Adrenal gland (tissue), 19 donors: ENCODE measurements at regions of chr13 and their contacts with region 1.

Region 1: GRCh38 chr13:20713751-20714150 is 10.3 kb downstream of the IL17D start:
- DNase-seq: peak in 5 of 7 donors; percentile 54 to 79 (median 69)
- H3K4me3 ChIP-seq: no peak overlapping the region
- H3K27ac ChIP-seq: peak overlapping the region in 2 of 5 donors; percentile 50 to 62
- H3K4me1 ChIP-seq: peaks cover 5 to 24% of the 10 kb centered on the region in 2 donors
- H3K27me3 ChIP-seq: no peaks in the 10 kb centered on the region
- CTCF ChIP-seq: no peak
- POLR2A ChIP-seq: peak in 1 of 2 donors; percentile 15

Region 2: DNA sequence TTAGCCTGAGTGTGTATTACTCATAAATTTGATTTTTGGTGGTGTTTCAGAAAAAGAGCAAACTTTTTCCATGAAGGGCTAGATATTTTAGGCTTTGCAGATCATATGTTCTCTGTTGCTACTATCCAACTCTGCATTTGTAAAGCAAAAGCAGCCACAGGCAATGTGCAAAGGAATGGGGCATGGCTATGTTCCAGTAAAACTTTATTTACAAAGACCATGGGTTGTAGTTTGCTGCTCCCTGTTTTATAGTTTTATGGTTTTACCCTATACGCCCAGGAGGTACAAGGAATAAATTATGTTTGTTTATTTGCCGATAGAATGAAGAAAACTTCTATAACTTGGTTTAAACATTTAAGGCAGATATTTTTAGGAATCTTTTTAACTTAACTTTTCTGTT is 123.2 kb before region 1 on chr13:
- intact Hi-C with region 1: no loop called
- DNase-seq: no peak
- H3K4me3 ChIP-seq: no peak overlapping the region
- H3K27ac ChIP-seq: no peak overlapping the region
- H3K4me1 ChIP-seq: no peaks in the 10 kb centered on the region
- H3K27me3 ChIP-seq: no peaks in the 10 kb centered on the region
- CTCF ChIP-seq: no peak
- POLR2A ChIP-seq: no peak

Region 3: GRCh38 chr13:20654156-20654555 is 59.6 kb before region 1 on chr13:
- intact Hi-C with region 1: no loop called
- DNase-seq: no peak
- H3K4me3 ChIP-seq: no peak overlapping the region
- H3K27ac ChIP-seq: no peak overlapping the region
- H3K4me1 ChIP-seq: no peaks in the 10 kb centered on the region
- H3K27me3 ChIP-seq: no peaks in the 10 kb centered on the region
- CTCF ChIP-seq: no peak
- POLR2A ChIP-seq: no peak

Region 4: DNA sequence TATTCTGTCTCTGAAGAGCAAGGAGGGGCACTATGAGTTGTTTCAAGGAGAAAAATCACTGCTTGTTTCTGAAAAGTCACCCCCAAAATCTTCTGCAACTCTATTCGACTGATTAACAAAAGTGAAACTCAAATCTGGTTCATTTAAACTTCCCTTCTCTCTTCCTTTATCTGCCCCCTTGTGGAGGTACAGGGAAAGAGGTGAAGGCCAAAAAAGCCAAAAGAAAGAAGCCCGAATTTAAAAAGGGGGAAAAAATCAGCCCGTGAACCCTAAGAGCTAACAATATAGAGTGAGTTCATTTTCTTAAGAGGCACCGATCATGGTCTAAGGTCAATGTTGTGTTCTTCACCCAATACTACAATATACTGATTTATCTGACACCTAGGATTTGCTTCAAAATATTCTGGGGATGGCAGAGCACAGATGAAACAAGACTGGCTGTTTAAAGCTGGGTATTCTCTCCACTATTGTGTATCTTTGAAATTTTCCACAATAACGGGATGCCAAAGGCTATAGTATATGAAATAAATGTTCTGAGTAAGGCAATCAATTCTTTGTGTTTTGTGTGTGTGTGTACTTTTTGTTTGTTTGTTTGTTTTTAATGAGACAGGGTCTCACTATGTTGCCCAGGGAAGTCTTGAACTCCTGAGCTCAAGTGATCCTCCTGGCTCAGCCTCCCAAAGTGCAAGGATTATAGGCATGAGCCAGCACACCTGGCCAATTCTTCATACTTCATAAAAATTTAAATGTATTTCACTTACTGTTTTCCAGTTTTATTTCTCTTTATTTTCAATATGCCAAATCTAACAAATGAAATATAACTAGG is 115.0 kb after region 1 on chr13:
- intact Hi-C with region 1: loop called (anchors 5 kb)
- DNase-seq: peak in 5 of 7 donors; percentile 32 to 52 (median 42)
- H3K4me3 ChIP-seq: peak overlapping the region in 1 of 4 donors; percentile 46
- H3K27ac ChIP-seq: peak overlapping the region in 2 of 5 donors; percentile 7 to 46
- H3K4me1 ChIP-seq: no peaks in the 10 kb centered on the region
- H3K27me3 ChIP-seq: no peaks in the 10 kb centered on the region
- CTCF ChIP-seq: peak; percentile 73 to 91 (median 80)
- POLR2A ChIP-seq: no peak

Region 5: GRCh38 chr13:20924758-20925394 is 211.1 kb after region 1 on chr13:
- intact Hi-C with region 1: loop called in 1 of 2 experiments (anchors 5 kb)
- DNase-seq: peak; percentile 66 to 91 (median 84)
- H3K4me3 ChIP-seq: no peak overlapping the region
- H3K27ac ChIP-seq: no peak overlapping the region
- H3K4me1 ChIP-seq: no peaks in the 10 kb centered on the region
- H3K27me3 ChIP-seq: no peaks in the 10 kb centered on the region
- CTCF ChIP-seq: peak; percentile 50 to 84 (median 67)
- POLR2A ChIP-seq: no peak